CD8-positive, alpha-beta memory T cell (primary cell): ENCODE measurements at regions of chr12 and their contacts with region 1.

Region 1: DNA sequence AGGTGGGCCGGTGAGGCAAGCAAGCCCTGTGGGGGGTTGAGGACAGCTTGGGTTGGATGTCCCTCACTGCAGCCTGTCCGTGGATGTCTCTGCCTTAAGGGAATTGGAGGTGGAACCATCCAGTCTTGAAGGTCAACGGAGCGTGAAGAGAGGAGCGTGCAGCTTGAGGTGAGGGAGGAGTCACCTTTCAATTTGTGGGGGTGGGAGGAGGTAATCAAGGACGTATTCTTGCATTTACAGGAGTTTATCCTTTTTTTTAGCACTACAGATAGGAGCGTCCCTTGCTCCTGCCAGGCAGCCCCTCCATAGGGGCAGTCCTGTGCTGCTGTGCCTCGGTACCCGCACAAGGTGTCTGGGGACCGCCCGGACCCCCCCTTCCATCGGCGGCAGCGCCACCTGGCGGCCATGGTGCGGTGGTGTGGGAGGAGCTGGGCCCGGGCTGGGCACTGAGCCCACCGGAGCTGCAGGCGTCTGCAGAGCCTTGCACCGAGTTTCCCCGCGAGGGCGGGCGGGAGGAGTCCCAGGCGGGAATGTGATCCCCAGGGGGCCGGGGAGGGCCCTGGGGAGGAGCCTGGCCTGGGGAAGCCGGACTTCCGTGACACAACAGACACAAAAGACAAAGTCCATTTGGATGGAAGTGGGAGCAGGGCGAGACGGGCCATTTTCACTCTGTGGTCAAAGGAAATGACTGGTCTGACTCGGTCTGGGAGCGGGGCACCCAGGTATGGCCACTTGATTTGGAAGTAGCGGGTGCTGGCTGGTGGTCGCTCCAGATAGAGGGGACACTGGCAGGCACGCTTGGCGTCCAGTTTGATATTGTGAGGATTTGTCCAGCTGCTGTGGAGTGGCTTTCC is 923 bp downstream of the DNAJC22 start:
- DNase-seq: peak; percentile 71 to 85 (median 76)
- H3K4me3 ChIP-seq: peak overlapping the region; percentile 69
- H3K4me3 Mint-ChIP-seq: peak overlapping the region; percentile 66 to 94 (median 85)
- H3K27ac ChIP-seq: no peak overlapping the region
- H3K27ac Mint-ChIP-seq: no peak overlapping the region
- H3K4me1 ChIP-seq: peaks cover 45% of the 10 kb centered on the region
- H3K4me1 Mint-ChIP-seq: peaks cover 32 to 52% (median 39%) of the 10 kb centered on the region in 3 donors
- H3K27me3 ChIP-seq: peaks cover 55% of the 10 kb centered on the region
- H3K27me3 Mint-ChIP-seq: peaks cover 45 to 61% of the 10 kb centered on the region in 2 donors

Region 2: DNA sequence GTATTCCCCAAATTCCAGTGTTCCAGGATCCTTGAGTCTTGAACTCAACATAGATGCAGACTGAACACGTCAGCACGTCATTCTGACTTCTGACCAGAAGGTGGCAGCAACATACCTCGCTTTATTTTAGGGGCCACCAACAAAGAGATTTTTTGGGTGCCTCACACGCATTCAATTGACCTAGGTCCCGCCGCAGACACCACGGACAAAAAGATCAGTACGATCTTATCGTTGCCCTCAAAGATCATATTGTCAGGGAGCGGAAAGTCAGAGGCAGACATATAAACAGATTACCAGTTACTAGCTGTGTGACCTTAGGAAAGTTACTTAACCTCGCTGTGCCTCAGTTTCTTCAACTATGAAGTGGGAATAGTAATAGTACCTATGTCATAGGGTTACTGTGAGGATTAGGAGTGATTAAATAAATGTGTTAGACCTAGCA is 59.2 kb before region 1 on chr12:
- CTCF ChIA-PET with region 1: interaction called, 109 read pairs
- POLR2A ChIA-PET with region 1: interaction called, 4 read pairs
- DNase-seq: peak; percentile 51 to 75 (median 67)
- H3K4me3 ChIP-seq: no peak overlapping the region
- H3K4me3 Mint-ChIP-seq: no peak overlapping the region
- H3K27ac ChIP-seq: no peak overlapping the region
- H3K27ac Mint-ChIP-seq: no peak overlapping the region
- H3K4me1 ChIP-seq: no peaks in the 10 kb centered on the region
- H3K4me1 Mint-ChIP-seq: no peaks in the 10 kb centered on the region
- H3K27me3 ChIP-seq: peaks cover 7% of the 10 kb centered on the region
- H3K27me3 Mint-ChIP-seq: peaks cover 16 to 48% of the 10 kb centered on the region in 2 donors

Region 3: GRCh38 chr12:49322708-49323523 is 24.7 kb before region 1 on chr12 and contains the start of gene TROAP:
- CTCF ChIA-PET with region 1: interaction called, 36 read pairs
- POLR2A ChIA-PET with region 1: interaction called, 7 read pairs
- DNase-seq: peak; percentile 95 to 98 (median 97)
- H3K4me3 ChIP-seq: peak within 1 kb of the TSS; percentile 79
- H3K4me3 Mint-ChIP-seq: peak within 1 kb of the TSS; percentile 86 to 95 (median 90)
- H3K27ac ChIP-seq: peak within 1 kb of the TSS; percentile 77
- H3K27ac Mint-ChIP-seq: peak within 1 kb of the TSS; percentile 18 to 97 (median 85)
- H3K4me1 ChIP-seq: peaks cover 14% of the 10 kb centered on the region
- H3K4me1 Mint-ChIP-seq: peaks cover 18 to 23% (median 22%) of the 10 kb centered on the region in 3 donors
- H3K27me3 ChIP-seq: no peaks in the 10 kb centered on the region
- H3K27me3 Mint-ChIP-seq: no peaks in the 10 kb centered on the region
- total RNA-seq, gene TROAP: 33.6 to 35.0 TPM

Region 4: DNA sequence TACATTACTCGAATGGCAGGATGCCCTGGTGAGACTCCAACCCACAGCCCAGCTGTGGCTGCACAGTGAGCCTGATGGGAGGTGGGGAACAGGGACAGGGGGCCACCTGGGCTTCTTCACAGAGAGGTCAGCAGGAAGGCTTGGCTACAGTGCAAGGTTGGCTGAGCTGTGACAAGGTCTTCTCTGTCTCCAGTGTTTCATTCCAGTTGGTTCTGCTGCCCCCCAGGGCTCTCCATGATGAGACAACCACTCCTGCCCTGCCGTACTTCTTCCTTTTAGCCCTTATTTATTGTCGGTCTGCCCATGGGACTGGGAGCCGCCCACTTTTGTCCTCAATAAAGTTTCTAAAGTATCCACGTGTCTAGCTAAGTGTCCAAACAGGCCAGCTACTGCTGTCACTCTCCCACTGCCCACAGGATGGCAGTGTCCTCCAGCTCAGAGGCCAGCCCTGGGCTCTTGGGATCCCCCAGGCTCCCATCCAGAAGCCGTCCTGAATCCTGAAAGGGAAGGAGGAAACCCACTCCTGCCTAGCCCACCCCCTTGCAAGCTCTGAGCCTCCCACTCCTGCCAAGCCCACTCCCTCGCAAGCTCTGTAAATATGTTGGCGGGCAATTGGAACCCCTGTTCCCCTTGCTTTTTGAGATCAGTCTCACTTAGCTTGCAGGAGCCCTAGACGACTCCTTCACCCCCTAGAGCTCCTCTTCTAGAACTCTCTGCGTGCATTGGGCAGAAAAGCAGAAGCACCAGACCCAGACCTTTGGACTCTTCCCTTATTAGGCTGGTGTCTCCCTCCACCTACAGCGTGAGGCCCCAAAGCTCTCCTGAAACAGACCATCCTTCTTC is 16.0 kb before region 1 on chr12:
- CTCF ChIA-PET with region 1: interaction called, 36 read pairs
- POLR2A ChIA-PET with region 1: no interaction called
- DNase-seq: no peak
- H3K4me3 ChIP-seq: no peak overlapping the region
- H3K4me3 Mint-ChIP-seq: peak overlapping the region in 1 of 7 donors; percentile 32
- H3K27ac ChIP-seq: no peak overlapping the region
- H3K27ac Mint-ChIP-seq: peak overlapping the region in 2 of 8 donors; percentile 25 to 54
- H3K4me1 ChIP-seq: peaks cover 1% of the 10 kb centered on the region
- H3K4me1 Mint-ChIP-seq: peaks cover 5 to 15% (median 6%) of the 10 kb centered on the region in 3 donors
- H3K27me3 ChIP-seq: peaks cover 22% of the 10 kb centered on the region
- H3K27me3 Mint-ChIP-seq: peaks cover 29 to 41% of the 10 kb centered on the region in 2 donors

Region 5: DNA sequence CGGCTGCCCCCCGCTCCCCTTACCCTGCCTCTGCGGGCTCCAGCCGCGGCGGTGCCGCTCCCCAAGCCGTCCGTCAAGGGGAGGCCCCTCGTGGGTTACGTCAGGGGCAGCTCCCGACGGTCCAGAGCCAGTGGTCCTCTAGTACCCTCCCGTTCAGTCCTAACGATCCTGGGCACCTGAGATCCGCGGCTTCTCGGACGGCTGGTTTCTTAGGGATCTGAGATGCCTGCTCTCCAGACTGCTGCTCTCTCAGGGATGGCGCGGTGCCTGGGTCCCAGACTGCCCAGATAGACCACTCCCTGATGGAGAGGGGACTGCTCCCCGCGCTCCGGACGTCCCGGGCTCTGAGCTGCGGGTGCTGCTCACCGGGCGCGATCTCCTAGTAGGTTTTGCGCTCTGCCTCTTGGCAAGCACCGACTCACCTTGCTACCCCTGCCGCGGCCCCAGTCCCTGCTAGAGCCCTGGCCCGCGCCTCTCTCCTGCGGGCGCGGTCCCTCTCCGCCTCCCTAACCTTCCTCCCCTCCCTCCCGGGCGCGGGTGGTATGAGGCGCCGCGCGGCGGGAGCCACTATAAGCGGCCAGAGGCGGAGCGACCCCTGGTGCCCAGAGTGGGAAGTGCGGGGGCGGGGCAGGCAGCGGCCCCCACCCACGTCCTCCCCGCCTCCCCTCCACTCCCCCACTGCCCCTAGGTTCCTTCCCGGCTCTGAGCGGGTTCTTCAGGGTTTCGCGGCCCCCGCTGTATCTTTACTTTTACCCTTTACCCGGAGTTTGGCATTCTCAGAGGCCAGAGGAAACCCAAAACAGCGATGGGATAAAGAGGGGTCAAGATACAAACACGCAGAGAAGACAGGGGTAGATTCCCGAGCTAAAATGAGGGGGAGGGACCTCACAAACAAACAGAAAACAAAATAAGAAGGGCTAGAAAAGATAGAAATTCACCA is 10.7 kb before region 1 on chr12 and contains the start of gene C1QL4:
- CTCF ChIA-PET with region 1: interaction called, 27 read pairs
- POLR2A ChIA-PET with region 1: no interaction called
- DNase-seq: peak; percentile 80 to 90 (median 85)
- H3K4me3 ChIP-seq: peak within 1 kb of the TSS; percentile 46
- H3K4me3 Mint-ChIP-seq: peak within 1 kb of the TSS; percentile 27 to 89 (median 75)
- H3K27ac ChIP-seq: peak within 1 kb of the TSS; percentile 16
- H3K27ac Mint-ChIP-seq: peak within 1 kb of the TSS in 3 of 8 donors; percentile 51 to 77 (median 64)
- H3K4me1 ChIP-seq: peaks cover 11% of the 10 kb centered on the region
- H3K4me1 Mint-ChIP-seq: peaks cover 19 to 39% (median 20%) of the 10 kb centered on the region in 3 donors
- H3K27me3 ChIP-seq: peaks cover 29% of the 10 kb centered on the region
- H3K27me3 Mint-ChIP-seq: peaks cover 42 to 61% of the 10 kb centered on the region in 2 donors
- total RNA-seq, gene C1QL4: not detected

Region 6: GRCh38 chr12:49366652-49367380 is 19.2 kb after region 1 on chr12:
- CTCF ChIA-PET with region 1: interaction called, 18 read pairs
- POLR2A ChIA-PET with region 1: interaction called, 12 read pairs
- DNase-seq: peak; percentile 76 to 89 (median 79)
- H3K4me3 ChIP-seq: peak overlapping the region; percentile 82
- H3K4me3 Mint-ChIP-seq: peak overlapping the region; percentile 89 to 98 (median 96)
- H3K27ac ChIP-seq: peak overlapping the region; percentile 91
- H3K27ac Mint-ChIP-seq: peak overlapping the region; percentile 60 to 98 (median 94)
- H3K4me1 ChIP-seq: peaks cover 20% of the 10 kb centered on the region
- H3K4me1 Mint-ChIP-seq: peaks cover 19 to 43% (median 37%) of the 10 kb centered on the region in 3 donors
- H3K27me3 ChIP-seq: no peaks in the 10 kb centered on the region
- H3K27me3 Mint-ChIP-seq: peaks cover 0 to 4% of the 10 kb centered on the region in 2 donors

Region 7: DNA sequence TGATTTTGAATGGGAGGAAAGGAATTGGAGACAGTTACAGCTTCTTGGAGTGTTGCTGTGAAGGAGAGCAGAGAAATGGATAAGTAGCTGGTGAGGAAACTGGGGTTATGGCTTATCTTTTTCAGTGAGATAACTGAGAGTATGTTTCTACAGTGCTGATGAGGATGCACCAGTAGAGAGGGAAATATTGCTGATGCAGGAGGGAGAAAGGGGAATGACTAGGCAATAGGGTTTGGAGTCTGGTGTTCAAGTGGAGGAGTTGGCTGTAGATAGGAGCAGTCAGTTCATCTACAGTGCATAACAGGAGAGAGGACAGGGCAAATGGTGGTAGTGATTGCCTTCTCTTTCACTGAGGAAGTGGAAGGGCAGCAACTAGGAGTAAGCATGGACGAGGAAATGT is 52.7 kb after region 1 on chr12:
- CTCF ChIA-PET with region 1: no interaction called
- POLR2A ChIA-PET with region 1: no interaction called
- DNase-seq: no peak
- H3K4me3 ChIP-seq: no peak overlapping the region
- H3K4me3 Mint-ChIP-seq: no peak overlapping the region
- H3K27ac ChIP-seq: no peak overlapping the region
- H3K27ac Mint-ChIP-seq: peak overlapping the region in 1 of 8 donors; percentile 46
- H3K4me1 ChIP-seq: peaks cover 11% of the 10 kb centered on the region
- H3K4me1 Mint-ChIP-seq: peaks cover 8 to 11% (median 9%) of the 10 kb centered on the region in 3 donors
- H3K27me3 ChIP-seq: no peaks in the 10 kb centered on the region
- H3K27me3 Mint-ChIP-seq: no peaks in the 10 kb centered on the region

Region 8: GRCh38 chr12:49515266-49515665 is 167.7 kb after region 1 on chr12:
- CTCF ChIA-PET with region 1: interaction called, 16 read pairs
- POLR2A ChIA-PET with region 1: no interaction called
- DNase-seq: no peak
- H3K4me3 ChIP-seq: no peak overlapping the region
- H3K4me3 Mint-ChIP-seq: no peak overlapping the region
- H3K27ac ChIP-seq: no peak overlapping the region
- H3K27ac Mint-ChIP-seq: no peak overlapping the region
- H3K4me1 ChIP-seq: no peaks in the 10 kb centered on the region
- H3K4me1 Mint-ChIP-seq: no peaks in the 10 kb centered on the region
- H3K27me3 ChIP-seq: no peaks in the 10 kb centered on the region
- H3K27me3 Mint-ChIP-seq: no peaks in the 10 kb centered on the region